Activated B cell treated with CpG ODN at 0.5 μM for 24 hours (primary cell): ENCODE measurements at regions of chr18 and their contacts with region 1.

Region 1: DNA sequence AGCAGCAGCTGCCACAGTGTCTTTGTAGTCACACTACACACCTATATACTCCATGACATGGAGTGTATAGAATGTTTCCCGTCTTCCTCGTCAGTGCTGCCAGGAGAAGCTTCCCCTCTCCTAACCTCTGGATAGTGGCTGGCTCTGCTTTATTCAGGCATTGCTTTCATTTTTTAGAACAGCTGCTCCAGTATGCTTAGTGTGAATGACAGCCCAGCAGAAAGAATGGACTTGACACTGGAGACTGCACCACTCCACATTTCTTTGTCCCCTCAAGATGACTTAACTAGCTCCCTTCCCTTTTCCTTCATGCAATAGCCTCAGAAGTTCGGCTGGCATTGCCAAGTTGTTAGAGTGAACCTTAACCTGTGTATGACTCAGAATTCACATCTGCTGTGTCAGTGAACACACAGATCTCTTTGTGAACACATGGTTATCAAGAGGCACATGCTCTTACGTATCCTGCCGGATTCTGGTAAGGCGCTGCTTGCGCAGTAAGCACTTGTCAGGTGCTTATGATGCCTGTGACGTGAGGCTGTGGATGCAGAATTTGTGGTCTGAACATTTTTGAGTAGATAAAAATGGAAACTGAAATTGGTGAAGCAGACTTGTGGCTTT is 73.9 kb downstream of the NEDD4L start:
- DNase-seq: no peak
- ATAC-seq: no peak
- H3K4me3 Mint-ChIP-seq: no peak overlapping the region
- H3K27ac Mint-ChIP-seq: no peak overlapping the region
- H3K4me1 Mint-ChIP-seq: peaks cover 10% of the 10 kb centered on the region
- H3K27me3 Mint-ChIP-seq: no peaks in the 10 kb centered on the region
- CTCF ChIP-seq: no peak

Region 2: DNA sequence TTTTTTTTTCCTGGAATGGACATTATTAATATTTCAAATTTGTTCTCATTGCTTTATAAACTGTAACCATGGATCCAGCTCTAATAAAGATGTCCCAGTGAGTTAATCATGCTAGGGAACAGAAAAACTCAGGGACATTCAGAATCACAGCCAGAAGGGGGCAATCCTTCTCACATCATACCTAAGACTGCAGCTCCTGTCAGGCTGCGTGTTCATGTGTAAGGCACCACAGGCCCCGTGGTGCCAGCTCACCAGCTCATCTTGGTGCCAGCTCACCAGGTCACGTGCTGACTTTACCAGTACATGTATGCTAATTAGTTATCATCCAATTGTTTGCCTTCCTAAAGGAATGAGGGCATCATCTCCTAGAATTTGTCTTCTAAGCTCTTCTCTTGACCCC is 158.6 kb before region 1 on chr18:
- CTCF ChIA-PET with region 1: interaction called, 82 read pairs
- POLR2A ChIA-PET with region 1: interaction called, 7 read pairs
- intact Hi-C with region 1: loop called (anchors 1 kb)
- DNase-seq: no peak
- ATAC-seq: peak; percentile 88
- H3K4me3 Mint-ChIP-seq: no peak overlapping the region
- H3K27ac Mint-ChIP-seq: no peak overlapping the region
- H3K4me1 Mint-ChIP-seq: no peaks in the 10 kb centered on the region
- H3K27me3 Mint-ChIP-seq: no peaks in the 10 kb centered on the region
- CTCF ChIP-seq: no peak

Region 3: GRCh38 chr18:58051765-58052460 is 66.0 kb before region 1 on chr18:
- CTCF ChIA-PET with region 1: interaction called, 27 read pairs
- POLR2A ChIA-PET with region 1: no interaction called
- intact Hi-C with region 1: loop called (anchors 1 kb)
- DNase-seq: no peak
- ATAC-seq: peak; percentile 42
- H3K4me3 Mint-ChIP-seq: no peak overlapping the region
- H3K27ac Mint-ChIP-seq: no peak overlapping the region
- H3K4me1 Mint-ChIP-seq: peaks cover 7% of the 10 kb centered on the region
- H3K27me3 Mint-ChIP-seq: no peaks in the 10 kb centered on the region
- CTCF ChIP-seq: no peak

Region 4: DNA sequence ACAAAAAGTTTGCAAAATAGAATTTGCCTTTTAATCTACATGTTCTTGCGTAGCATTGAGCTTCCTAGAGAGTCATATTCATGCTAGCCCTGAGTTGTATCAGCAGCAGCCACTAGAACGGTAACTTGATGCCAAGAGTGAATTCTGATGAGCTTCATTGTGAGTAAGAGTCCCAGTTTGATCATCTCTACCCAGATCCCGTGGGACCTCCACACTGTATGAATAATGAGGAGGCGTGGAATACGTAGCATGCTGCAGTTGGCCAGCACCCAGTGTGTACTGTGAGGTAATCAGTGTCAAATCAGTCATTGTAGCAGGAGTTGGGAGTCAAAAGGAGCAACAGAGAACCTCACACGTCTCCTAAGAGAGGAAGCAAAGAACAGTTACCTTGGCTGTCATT is 124.0 kb after region 1 on chr18:
- CTCF ChIA-PET with region 1: no interaction called
- POLR2A ChIA-PET with region 1: no interaction called
- intact Hi-C with region 1: no loop called
- DNase-seq: no peak
- ATAC-seq: no peak
- H3K4me3 Mint-ChIP-seq: no peak overlapping the region
- H3K27ac Mint-ChIP-seq: no peak overlapping the region
- H3K4me1 Mint-ChIP-seq: no peaks in the 10 kb centered on the region
- H3K27me3 Mint-ChIP-seq: no peaks in the 10 kb centered on the region
- CTCF ChIP-seq: no peak